ENCODE measurements at regions of chr20 and their contacts with region 1.

Region 1: DNA sequence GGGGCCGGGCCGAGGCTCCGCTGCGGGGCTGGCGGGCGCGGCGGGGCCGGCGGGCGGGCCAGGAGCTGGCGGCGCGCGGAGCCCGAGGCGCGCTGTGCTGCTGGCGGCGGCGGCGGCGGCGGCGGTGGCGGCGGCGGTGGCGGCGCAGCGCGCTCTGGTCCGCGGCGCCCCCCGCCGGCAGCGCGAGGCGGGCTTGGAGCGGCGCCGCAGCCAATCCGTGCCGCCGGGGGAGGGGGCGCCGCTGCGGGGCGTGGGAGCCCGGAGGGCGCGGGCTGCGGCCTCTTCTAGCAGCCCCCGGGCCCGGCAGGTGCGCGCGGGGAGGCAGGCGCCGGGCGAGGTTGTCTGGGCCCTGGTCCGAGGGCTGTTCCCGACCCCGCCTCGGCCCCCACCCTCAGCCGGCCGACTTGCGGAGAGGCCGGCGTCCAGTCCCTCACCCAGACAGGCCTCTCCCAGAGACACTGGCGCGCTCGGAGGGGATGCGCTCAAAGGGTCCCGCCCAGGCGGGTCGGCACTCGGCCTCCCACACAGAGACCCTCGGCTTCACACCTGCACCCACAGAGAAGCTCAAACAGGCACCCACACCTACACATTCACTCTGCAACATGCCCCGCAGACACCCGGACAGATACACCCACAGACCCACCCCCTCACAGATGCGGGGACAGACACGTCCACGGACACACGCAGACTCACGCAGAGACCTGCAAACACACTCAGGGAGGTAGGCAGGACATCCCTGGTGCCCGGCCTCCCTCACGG is at the start of gene RIMS4:
- DNase-seq: peak; percentile 43 to 80
- H3K4me3 ChIP-seq: peak within 1 kb of the TSS; percentile 44
- H3K4me3 Mint-ChIP-seq: peak within 1 kb of the TSS; percentile 72
- H3K27ac Mint-ChIP-seq: no peak within 1 kb of the TSS
- H3K4me1 ChIP-seq: peaks cover 5% of the 10 kb centered on the region; the same call in 1 of the 2 replicates
- H3K4me1 Mint-ChIP-seq: no peaks in the 10 kb centered on the region
- H3K27me3 ChIP-seq: peaks cover 5% of the 10 kb centered on the region; the same call in 1 of the 2 replicates
- H3K27me3 Mint-ChIP-seq: peaks cover 26% of the 10 kb centered on the region
- CTCF ChIP-seq: peak in 1 of 2 experiments; percentile 7
- total RNA-seq, gene RIMS4: 7.8 and 9.0 TPM in 2 replicates

Region 2: DNA sequence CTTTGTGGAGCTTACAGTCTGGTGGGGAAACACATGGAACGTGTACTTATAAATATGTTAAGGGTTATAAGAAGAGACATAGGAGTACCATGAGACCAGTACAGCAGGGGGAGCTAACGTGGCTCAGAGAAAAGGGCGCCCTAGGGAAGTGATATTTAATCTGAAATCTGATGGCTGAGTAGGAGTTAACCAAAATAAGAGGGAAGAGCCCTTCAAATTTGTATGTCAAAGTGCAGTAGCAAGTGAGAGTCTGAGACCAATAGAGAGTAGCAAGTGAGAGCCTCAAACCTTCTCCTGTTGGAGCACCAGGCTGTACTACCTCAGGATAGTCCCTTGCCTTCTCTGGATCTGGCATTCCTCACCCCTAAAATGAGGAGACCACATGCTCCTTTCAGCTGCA is 234.3 kb before region 1 on chr20:
- CTCF ChIA-PET with region 1: no interaction called
- POLR2A ChIA-PET with region 1: no interaction called
- intact Hi-C with region 1: no loop called
- DNase-seq: peak in 1 of 2 experiments; percentile 48
- H3K4me3 ChIP-seq: no peak overlapping the region
- H3K4me3 Mint-ChIP-seq: no peak overlapping the region
- H3K27ac Mint-ChIP-seq: no peak overlapping the region
- H3K4me1 ChIP-seq: 0 out of 2 replicates have a peak, but pooled peaks cover 9% of the 10 kb centered on the region
- H3K4me1 Mint-ChIP-seq: peaks cover 21% of the 10 kb centered on the region
- H3K27me3 ChIP-seq: no peaks in the 10 kb centered on the region
- H3K27me3 Mint-ChIP-seq: no peaks in the 10 kb centered on the region
- CTCF ChIP-seq: peak; percentile 44 to 62

Region 3: DNA sequence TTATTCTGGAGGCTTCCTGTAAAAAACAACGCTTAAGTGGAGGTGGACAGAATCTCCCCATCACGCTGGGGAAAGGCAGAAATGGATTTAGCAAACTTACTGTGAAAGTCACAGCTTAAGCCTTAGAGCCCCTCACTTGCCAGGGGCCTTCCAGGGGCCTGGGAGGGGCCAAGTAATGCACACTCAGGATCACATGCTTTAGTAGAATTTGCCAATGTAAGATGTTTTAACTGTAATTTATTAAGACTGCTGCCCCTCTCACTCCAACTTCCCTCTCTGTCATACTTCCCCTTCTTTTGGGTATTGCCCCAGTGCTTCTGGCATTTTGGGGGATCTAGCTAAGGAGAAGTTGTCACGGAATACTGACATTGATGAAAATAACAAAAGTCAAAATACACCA is 146.4 kb before region 1 on chr20:
- CTCF ChIA-PET with region 1: no interaction called
- POLR2A ChIA-PET with region 1: no interaction called
- intact Hi-C with region 1: no loop called
- DNase-seq: no peak
- H3K4me3 ChIP-seq: no peak overlapping the region
- H3K4me3 Mint-ChIP-seq: no peak overlapping the region
- H3K27ac Mint-ChIP-seq: no peak overlapping the region
- H3K4me1 ChIP-seq: 0 out of 2 replicates have a peak, but pooled peaks cover 3% of the 10 kb centered on the region
- H3K4me1 Mint-ChIP-seq: no peaks in the 10 kb centered on the region
- H3K27me3 ChIP-seq: no peaks in the 10 kb centered on the region
- H3K27me3 Mint-ChIP-seq: no peaks in the 10 kb centered on the region
- CTCF ChIP-seq: no peak

Region 4: GRCh38 chr20:44849703-44850102 is 39.1 kb after region 1 on chr20:
- CTCF ChIA-PET with region 1: no interaction called
- POLR2A ChIA-PET with region 1: no interaction called
- intact Hi-C with region 1: loop called (anchors 5 kb)
- DNase-seq: no peak
- H3K4me3 ChIP-seq: no peak overlapping the region
- H3K4me3 Mint-ChIP-seq: no peak overlapping the region
- H3K27ac Mint-ChIP-seq: no peak overlapping the region
- H3K4me1 ChIP-seq: peaks cover 25% of the 10 kb centered on the region
- H3K4me1 Mint-ChIP-seq: peaks cover 32% of the 10 kb centered on the region
- H3K27me3 ChIP-seq: no peaks in the 10 kb centered on the region
- H3K27me3 Mint-ChIP-seq: no peaks in the 10 kb centered on the region
- CTCF ChIP-seq: peak; percentile 18 to 43

Measured in Caco-2 (cell line).